ENCODE measurements at regions of chr18 and their contacts with region 1.

Region 1: GRCh38 chr18:11908182-11909060 is at the start of gene MPPE1:
- DNase-seq: peak; percentile 86
- H3K4me3 Mint-ChIP-seq: peak within 1 kb of the TSS; percentile 90
- H3K27ac Mint-ChIP-seq: peak within 1 kb of the TSS; percentile 87
- H3K4me1 Mint-ChIP-seq: peaks cover 22% of the 10 kb centered on the region
- H3K27me3 Mint-ChIP-seq: no peaks in the 10 kb centered on the region
- total RNA-seq, gene MPPE1: 37.5 and 40.6 TPM in 2 replicates

Region 2: DNA sequence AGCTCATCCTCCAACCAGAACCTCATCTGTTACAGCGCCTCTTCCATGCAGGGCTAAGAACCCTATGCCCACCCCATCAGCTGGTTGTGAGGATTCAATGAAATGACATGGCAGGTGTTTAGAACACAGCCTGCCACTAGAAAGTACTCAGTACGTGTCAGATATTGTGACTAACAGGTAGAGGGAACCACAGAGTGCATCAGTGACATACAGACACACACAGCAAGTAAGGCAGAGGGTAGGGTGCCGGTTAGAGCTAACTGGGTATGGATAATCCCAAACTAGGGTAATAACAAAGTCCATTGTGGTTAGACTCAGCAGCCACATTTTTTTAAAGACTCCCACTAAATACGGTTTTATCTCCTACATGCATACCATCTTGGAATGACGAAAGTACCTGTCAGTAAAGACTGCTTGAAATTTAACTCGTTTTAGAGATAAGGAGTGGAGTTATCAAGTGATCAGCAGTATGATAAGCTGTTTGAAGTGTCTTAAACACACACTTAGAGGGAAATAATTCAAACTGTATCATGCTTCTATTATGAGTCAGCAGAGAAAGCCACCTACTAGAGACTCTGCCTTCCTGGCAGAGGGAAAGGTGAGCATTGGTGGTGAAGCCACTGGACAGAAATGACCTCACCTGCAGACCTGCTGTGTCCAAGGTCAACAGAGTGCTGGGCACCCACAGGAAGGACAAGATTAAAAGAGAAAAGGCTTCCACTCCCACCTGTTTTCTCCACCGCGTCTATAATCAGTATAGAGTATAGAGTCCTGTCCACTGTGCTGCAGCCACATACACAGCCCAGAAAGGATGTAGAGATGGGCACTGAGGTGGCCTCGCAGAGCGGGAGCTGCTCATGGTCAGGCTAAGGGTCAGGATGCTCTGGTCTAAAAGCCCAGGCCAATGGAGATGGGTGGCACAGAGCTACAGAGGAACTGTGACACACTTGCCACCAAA is 20.8 kb before region 1 on chr18:
- intact Hi-C with region 1: loop called (anchors 1 kb)
- DNase-seq: no peak
- H3K4me3 Mint-ChIP-seq: no peak overlapping the region
- H3K27ac Mint-ChIP-seq: peak overlapping the region; percentile 62
- H3K4me1 Mint-ChIP-seq: peaks cover 23% of the 10 kb centered on the region
- H3K27me3 Mint-ChIP-seq: no peaks in the 10 kb centered on the region

Region 3: DNA sequence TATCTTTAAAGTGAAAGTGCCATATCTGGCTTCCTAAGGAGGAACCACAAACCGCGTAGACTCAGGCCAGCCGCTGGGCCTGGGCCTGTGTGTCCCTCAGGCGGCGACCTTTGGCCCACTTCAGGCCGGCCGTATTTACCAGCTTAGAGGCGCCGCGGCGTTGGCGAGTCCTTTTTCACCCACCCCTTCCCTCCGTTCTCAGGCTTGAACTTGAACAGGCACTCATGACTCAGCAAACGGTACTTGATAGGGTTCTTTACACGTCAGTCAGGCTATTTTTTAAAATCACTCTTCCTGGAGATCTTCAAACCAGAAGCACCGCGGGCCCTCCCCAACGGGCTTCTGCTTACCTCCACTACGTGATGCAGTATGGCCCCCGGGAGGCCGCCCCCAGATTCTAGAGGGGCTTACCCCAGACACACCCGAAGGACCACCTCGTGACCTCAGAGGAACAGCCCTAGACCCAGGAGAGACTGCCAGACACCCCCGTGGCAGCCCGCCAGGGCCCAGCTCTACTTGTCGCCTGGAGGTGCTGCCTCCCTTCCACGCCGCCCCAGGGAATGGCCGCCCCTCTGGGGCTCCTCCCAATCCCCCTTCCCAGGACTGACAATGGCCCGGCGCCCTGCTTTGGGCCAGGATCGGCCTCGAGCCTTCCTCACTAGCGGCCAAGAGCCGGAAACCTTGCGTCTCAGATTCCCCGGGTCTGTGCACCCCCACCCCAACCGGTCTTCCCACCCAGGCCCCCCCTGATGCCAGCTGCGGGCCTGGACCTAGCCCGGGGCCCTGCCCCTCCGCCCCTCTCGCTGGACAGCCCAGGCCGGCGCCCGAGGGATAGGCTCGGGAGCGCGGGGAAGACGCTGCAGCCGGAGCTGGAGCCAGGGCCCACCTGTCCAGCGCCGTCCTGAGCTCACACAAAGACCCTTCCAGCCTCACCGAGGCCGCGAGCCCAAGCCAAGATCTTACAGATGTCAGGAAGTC is 39.1 kb after region 1 on chr18:
- intact Hi-C with region 1: loop called (anchors 1 kb)
- DNase-seq: peak; percentile 62
- H3K4me3 Mint-ChIP-seq: peak overlapping the region; percentile 66
- H3K27ac Mint-ChIP-seq: peak overlapping the region; percentile 82
- H3K4me1 Mint-ChIP-seq: peaks cover 11% of the 10 kb centered on the region
- H3K27me3 Mint-ChIP-seq: no peaks in the 10 kb centered on the region